Heart left ventricle (tissue), 16 donors: ENCODE measurements at regions of chr7 and their contacts with region 1.

Region 1: GRCh38 chr7:70477036-70478010 is 654.6 kb upstream of the GALNT17 start:
- DNase-seq: no peak
- ATAC-seq: peak; percentile 17 to 71 (median 54)
- H3K4me3 ChIP-seq: no peak overlapping the region
- H3K27ac ChIP-seq: no peak overlapping the region
- H3K4me1 ChIP-seq: peaks cover 0 to 35% (median 19%) of the 10 kb centered on the region in 12 donors
- H3K27me3 ChIP-seq: no peaks in the 10 kb centered on the region
- CTCF ChIP-seq: no peak
- POLR2A ChIP-seq: no peak

Region 2: DNA sequence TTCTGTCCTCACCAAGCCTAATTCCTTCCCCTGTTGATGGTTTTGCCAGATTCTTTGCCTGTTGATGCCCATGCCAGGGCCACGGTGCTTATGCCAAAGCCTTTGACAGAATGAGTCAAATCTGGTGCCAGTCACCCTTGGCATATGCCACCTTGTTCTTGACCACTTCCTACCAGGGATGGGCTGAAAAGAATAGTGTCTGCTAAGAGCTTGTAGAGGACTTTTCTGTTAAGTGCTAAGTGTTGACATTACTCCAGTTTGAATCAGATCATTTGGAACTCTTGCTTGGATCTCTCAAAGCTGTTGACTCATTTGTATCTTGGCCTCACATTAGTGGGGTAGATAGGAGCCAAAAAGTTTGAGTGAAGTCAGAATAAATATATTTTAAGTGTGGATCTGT is 217.8 kb before region 1 on chr7:
- intact Hi-C with region 1: loop called in 1 of 10 experiments (anchors 10 kb)
- DNase-seq: peak in 3 of 5 donors; percentile 20 to 49 (median 28)
- ATAC-seq: peak; percentile 44 to 86 (median 71)
- H3K4me3 ChIP-seq: no peak overlapping the region
- H3K27ac ChIP-seq: no peak overlapping the region
- H3K4me1 ChIP-seq: peaks cover 0 to 9% (median 1%) of the 10 kb centered on the region in 12 donors
- H3K27me3 ChIP-seq: no peaks in the 10 kb centered on the region
- CTCF ChIP-seq: no peak
- POLR2A ChIP-seq: no peak